ENCODE measurements at regions of chr1 and their contacts with region 1.

Region 1: GRCh38 chr1:38834937-38835827 is 24.4 kb downstream of the RRAGC start:
- DNase-seq: peak; percentile 84
- ATAC-seq: peak; percentile 78
- H3K4me3 ChIP-seq: no peak overlapping the region
- H3K4me3 Mint-ChIP-seq: no peak overlapping the region
- H3K27ac ChIP-seq: no peak overlapping the region
- H3K27ac Mint-ChIP-seq: no peak overlapping the region
- H3K4me1 ChIP-seq: peaks cover 0 to under 1% of the 10 kb centered on the region in 2 donors
- H3K4me1 Mint-ChIP-seq: peaks cover 3% of the 10 kb centered on the region
- H3K27me3 ChIP-seq: peaks cover 0 to 8% (median 2%) of the 10 kb centered on the region in 4 experiments
- H3K27me3 Mint-ChIP-seq: peaks cover 6% of the 10 kb centered on the region
- CTCF ChIP-seq: peak; percentile 88

Region 2: DNA sequence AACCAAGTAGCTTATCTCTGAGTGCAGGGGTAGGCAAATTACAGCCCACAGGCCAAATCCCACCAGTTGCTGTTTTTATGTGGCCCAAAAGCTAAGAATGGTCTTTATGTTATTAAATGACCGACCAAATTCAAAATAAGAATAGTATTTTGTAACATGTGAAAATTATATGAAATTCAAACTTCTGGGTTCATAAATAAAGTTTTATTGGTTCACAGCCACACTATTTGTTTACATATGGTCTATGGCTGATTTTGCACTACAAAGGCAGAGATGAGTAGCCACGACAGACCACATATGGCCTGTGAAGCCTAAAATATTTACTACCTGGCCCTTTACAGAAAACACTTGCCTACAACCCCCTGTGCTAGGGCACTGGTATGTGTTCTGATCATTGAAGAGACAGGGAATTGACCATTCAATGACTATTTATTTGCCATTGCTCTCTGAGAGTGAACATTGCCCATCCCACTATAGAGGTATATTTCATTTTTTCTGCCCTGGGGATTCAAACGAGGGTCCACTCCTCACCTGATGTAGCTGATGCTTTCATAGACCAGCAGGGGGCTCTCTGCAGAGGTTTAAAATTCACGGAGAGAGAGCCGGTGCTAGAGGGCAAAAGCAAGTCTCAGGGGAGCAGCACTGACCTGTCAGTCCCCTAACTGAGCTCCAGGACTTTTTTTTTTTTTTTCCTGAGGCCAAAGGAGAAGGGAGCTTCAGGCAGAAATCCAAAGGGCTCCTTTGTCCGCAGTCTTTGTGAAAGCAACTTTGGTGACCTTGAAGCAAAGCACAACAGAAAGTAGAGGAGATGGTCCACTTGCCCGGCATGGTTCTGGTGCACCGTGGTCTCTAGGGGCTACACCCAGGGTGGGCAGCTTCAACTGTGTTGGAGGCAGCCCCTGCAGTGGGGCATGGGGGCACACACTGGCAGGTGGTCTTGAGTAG is 1232.2 kb before region 1 on chr1:
- CTCF ChIA-PET with region 1: interaction called, 11 read pairs
- POLR2A ChIA-PET with region 1: no interaction called
- intact Hi-C with region 1: no loop called
- DNase-seq: peak; percentile 66
- ATAC-seq: peak; percentile 64
- H3K4me3 ChIP-seq: no peak overlapping the region
- H3K4me3 Mint-ChIP-seq: no peak overlapping the region
- H3K27ac ChIP-seq: no peak overlapping the region
- H3K27ac Mint-ChIP-seq: no peak overlapping the region
- H3K4me1 ChIP-seq: peaks cover 4% of the 10 kb centered on the region in 2 donors
- H3K4me1 Mint-ChIP-seq: no peaks in the 10 kb centered on the region
- H3K27me3 ChIP-seq: peaks cover 0 to 3% (median 1%) of the 10 kb centered on the region in 4 experiments
- H3K27me3 Mint-ChIP-seq: peaks cover 12% of the 10 kb centered on the region
- CTCF ChIP-seq: peak; percentile 83

Region 3: DNA sequence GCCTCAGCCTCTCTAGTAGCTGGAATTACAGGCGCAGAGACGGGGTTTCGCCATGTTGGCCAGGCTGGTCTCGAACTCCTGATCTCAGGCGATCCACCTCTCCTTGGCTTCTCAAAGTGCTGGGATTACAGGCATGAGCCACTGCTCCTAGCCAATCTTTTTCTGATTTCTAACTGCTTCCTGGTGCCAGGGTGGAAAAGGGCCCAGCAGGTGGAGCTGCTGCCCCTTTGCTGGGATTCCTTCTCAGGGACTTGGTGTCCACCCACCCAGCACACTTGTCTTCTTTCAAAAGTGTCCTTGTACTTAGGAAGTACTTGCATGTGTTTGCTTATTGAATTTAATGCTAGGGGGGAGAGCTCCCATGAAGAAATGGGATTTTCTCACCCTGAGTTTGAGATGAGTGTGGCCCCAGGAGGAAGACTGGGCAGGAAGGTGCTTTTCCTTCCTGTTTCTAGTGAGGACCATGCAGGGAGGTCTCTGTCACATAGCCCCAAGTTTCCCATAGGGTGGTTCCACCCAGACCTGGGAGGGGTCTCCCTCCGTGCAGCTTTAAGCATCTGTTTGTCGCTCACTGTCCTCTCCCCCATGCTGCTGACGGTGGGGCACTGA is 808.5 kb before region 1 on chr1:
- CTCF ChIA-PET with region 1: interaction called, 4 read pairs
- POLR2A ChIA-PET with region 1: no interaction called
- intact Hi-C with region 1: loop called (anchors 1 kb)
- DNase-seq: peak; percentile 38
- ATAC-seq: no peak
- H3K4me3 ChIP-seq: no peak overlapping the region
- H3K4me3 Mint-ChIP-seq: no peak overlapping the region
- H3K27ac ChIP-seq: no peak overlapping the region
- H3K27ac Mint-ChIP-seq: no peak overlapping the region
- H3K4me1 ChIP-seq: peaks cover 5 to 13% of the 10 kb centered on the region in 2 donors
- H3K4me1 Mint-ChIP-seq: peaks cover 19% of the 10 kb centered on the region
- H3K27me3 ChIP-seq: no peaks in the 10 kb centered on the region
- H3K27me3 Mint-ChIP-seq: peaks cover 4% of the 10 kb centered on the region
- CTCF ChIP-seq: peak; percentile 31

Region 4: GRCh38 chr1:38818175-38818976 is 16.8 kb before region 1 on chr1:
- CTCF ChIA-PET with region 1: interaction called, 38 read pairs
- POLR2A ChIA-PET with region 1: no interaction called
- intact Hi-C with region 1: no loop called
- DNase-seq: peak; percentile 62
- ATAC-seq: peak; percentile 69
- H3K4me3 ChIP-seq: peak overlapping the region in 4 of 5 experiments; percentile 8 to 38 (median 16)
- H3K4me3 Mint-ChIP-seq: peak overlapping the region; percentile 50
- H3K27ac ChIP-seq: no peak overlapping the region
- H3K27ac Mint-ChIP-seq: no peak overlapping the region
- H3K4me1 ChIP-seq: peaks cover 17 to 19% of the 10 kb centered on the region in 2 donors
- H3K4me1 Mint-ChIP-seq: peaks cover 17% of the 10 kb centered on the region
- H3K27me3 ChIP-seq: peaks cover 0 to 59% (median 43%) of the 10 kb centered on the region in 4 experiments
- H3K27me3 Mint-ChIP-seq: peaks cover 79% of the 10 kb centered on the region
- CTCF ChIP-seq: peak; percentile 94

Region 5: DNA sequence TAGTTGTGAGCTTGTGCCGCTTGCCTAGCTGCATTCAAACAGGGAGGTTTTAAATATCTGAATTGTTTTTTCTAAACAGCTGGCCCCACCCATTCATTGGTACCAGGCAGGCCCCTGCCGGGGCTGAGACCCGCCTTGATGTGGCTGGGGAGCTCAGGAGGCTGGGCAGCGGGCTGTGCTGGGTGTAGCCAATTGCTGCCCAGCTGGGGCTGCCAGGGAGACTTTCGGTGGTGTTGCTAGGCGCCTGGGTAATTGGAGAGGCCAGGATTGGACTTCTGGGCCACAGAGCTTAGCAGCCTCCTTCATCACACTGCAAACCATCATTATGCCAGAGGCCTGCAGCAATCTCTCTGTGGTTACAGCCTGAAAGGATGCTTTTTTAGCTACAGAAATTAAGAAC is 94.3 kb after region 1 on chr1:
- CTCF ChIA-PET with region 1: no interaction called
- POLR2A ChIA-PET with region 1: no interaction called
- intact Hi-C with region 1: no loop called
- DNase-seq: no peak
- ATAC-seq: no peak
- H3K4me3 ChIP-seq: no peak overlapping the region
- H3K4me3 Mint-ChIP-seq: no peak overlapping the region
- H3K27ac ChIP-seq: no peak overlapping the region
- H3K27ac Mint-ChIP-seq: no peak overlapping the region
- H3K4me1 ChIP-seq: no peaks in the 10 kb centered on the region
- H3K4me1 Mint-ChIP-seq: no peaks in the 10 kb centered on the region
- H3K27me3 ChIP-seq: no peaks in the 10 kb centered on the region
- H3K27me3 Mint-ChIP-seq: no peaks in the 10 kb centered on the region
- CTCF ChIP-seq: no peak